ENCODE measurements at regions of chr2 and their contacts with region 1.

Region 1: GRCh38 chr2:222641336-222641735 is 14.6 kb downstream of the FARSB start:
- DNase-seq: no peak
- ATAC-seq: no peak
- H3K4me3 ChIP-seq: no peak overlapping the region
- H3K27ac ChIP-seq: no peak overlapping the region
- H3K4me1 ChIP-seq: no peaks in the 10 kb centered on the region
- H3K27me3 ChIP-seq: no peaks in the 10 kb centered on the region
- CTCF ChIP-seq: no peak
- EP300 ChIP-seq: no peak
- POLR2A ChIP-seq: no peak
- RAD21 ChIP-seq: no peak

Region 2: GRCh38 chr2:222655787-222656525 is 14.6 kb after region 1 on chr2 and contains the start of gene FARSB:
- CTCF ChIA-PET with region 1: interaction called, 3 read pairs
- POLR2A ChIA-PET with region 1: interaction called, 4 read pairs
- RAD21 ChIA-PET with region 1: no interaction called
- SMC1A ChIA-PET with region 1: interaction called, 16 read pairs
- in situ Hi-C with region 1: no loop called
- intact Hi-C with region 1: no loop called
- DNase-seq: peak; percentile 94
- ATAC-seq: peak; percentile 90
- H3K4me3 ChIP-seq: peak within 1 kb of the TSS; percentile 95
- H3K27ac ChIP-seq: peak within 1 kb of the TSS; percentile 98
- H3K4me1 ChIP-seq: peaks cover 20% of the 10 kb centered on the region
- H3K27me3 ChIP-seq: no peaks in the 10 kb centered on the region
- CTCF ChIP-seq: no peak
- EP300 ChIP-seq: no peak
- POLR2A ChIP-seq: peak; percentile 97
- RAD21 ChIP-seq: no peak
- polyA plus RNA-seq, gene FARSB: 107 to 127 TPM